IMR-90 (cell line): ENCODE measurements at regions of chr12 and their contacts with region 1.

Region 1: GRCh38 chr12:4276524-4277204 is 3.1 kb downstream of the CCND2 start:
- DNase-seq: peak; percentile 82
- ATAC-seq: peak; percentile 77
- H3K4me3 ChIP-seq: no peak overlapping the region
- H3K27ac ChIP-seq: no peak overlapping the region
- H3K4me1 ChIP-seq: peaks cover 3% of the 10 kb centered on the region; the same call in 1 of the 2 replicates
- H3K27me3 ChIP-seq: peaks cover 47% of the 10 kb centered on the region
- CTCF ChIP-seq: peak; percentile 97
- POLR2A ChIP-seq: no peak
- RAD21 ChIP-seq: peak; percentile 95

Region 2: DNA sequence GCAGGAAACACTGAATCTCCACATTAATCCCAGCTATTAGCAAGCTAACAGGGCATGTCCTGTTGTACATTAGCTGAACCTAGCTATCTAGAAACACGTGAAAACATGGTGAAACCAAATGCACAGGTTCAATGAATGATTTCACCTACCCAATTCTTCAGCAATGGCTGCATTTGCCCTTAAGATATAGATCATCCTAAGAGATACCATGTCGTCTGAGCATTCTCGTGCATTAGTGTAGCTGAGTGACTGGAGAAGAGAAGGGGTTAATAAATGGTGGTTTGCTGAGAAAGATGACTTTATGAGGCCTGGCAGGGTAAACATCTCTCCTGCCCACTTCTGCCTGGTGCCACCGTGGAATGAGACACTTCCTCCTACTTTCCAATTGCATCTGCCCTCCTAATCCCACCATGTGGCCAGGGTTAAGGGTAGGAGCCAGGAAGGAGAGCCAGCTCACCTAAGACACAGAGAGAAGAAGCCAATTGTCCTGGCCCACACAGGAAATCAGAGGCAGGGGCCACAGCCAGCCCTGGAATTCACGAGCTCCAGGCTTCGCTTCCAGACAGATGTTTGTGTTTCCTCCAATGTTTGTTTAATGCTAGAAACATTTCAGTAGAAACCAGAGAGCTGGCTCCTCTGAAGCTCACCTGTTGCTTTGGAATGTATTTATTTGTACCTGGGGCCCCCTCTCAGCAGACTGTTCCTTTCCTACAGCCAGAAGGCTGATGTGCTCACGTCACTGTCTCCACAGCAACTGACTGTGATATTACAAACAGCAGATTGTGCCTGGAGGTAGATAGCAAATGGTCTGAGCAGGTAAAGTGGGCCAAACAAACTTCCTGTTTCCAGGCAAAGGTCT is 277.5 kb before region 1 on chr12:
- CTCF ChIA-PET with region 1: interaction called, 13 read pairs
- POLR2A ChIA-PET with region 1: no interaction called
- dilution Hi-C with region 1: no loop called
- in situ Hi-C with region 1: no loop called
- intact Hi-C with region 1: loop called (anchors 1 kb)
- DNase-seq: no peak
- ATAC-seq: no peak
- H3K4me3 ChIP-seq: no peak overlapping the region
- H3K27ac ChIP-seq: no peak overlapping the region
- H3K4me1 ChIP-seq: no peaks in the 10 kb centered on the region
- H3K27me3 ChIP-seq: peaks cover 9% of the 10 kb centered on the region
- CTCF ChIP-seq: no peak
- POLR2A ChIP-seq: no peak
- RAD21 ChIP-seq: no peak

Region 3: GRCh38 chr12:4037747-4038312 is 238.8 kb before region 1 on chr12:
- CTCF ChIA-PET with region 1: interaction called, 35 read pairs
- POLR2A ChIA-PET with region 1: no interaction called
- dilution Hi-C with region 1: no loop called
- in situ Hi-C with region 1: no loop called
- intact Hi-C with region 1: loop called (anchors 1 kb)
- DNase-seq: peak; percentile 44
- ATAC-seq: peak; percentile 59
- H3K4me3 ChIP-seq: no peak overlapping the region
- H3K27ac ChIP-seq: no peak overlapping the region
- H3K4me1 ChIP-seq: peaks cover 2% of the 10 kb centered on the region; the same call in 1 of the 2 replicates
- H3K27me3 ChIP-seq: peaks cover 27% of the 10 kb centered on the region
- CTCF ChIP-seq: peak; percentile 79
- POLR2A ChIP-seq: no peak
- RAD21 ChIP-seq: peak; percentile 63